Caco-2 (cell line): ENCODE measurements at regions of chr4 and their contacts with region 1.

Region 1: DNA sequence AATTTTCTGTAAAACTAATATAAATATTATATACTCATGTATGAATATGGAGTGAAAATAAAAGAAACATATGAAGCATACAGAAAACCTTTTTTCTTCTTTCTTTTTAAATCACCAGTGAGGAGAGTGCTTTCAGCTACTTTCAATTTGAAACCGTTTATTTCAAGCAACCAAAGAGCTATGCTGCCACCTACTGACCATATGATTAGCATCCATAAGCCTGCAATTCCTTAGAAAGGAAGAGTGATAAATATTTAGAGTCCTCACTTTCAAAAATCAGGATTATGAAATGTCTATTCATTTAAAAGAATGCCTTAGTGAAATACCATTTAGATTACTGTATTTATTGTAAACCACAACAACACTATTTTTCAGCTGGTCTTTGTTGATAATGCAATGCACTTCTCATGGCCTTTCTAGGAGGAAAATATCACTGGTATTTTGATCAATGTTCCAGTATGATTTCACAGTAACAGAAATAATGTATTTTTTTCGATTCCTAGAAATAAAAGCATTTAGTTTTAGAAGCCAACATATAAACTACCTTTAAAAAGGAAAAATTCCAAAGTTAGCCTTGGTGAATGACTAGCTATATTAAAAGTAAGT is 667.6 kb downstream of the PCDH18 start:
- DNase-seq: peak in 1 of 2 experiments; percentile 54
- H3K4me3 ChIP-seq: no peak overlapping the region
- H3K4me3 Mint-ChIP-seq: no peak overlapping the region
- H3K27ac Mint-ChIP-seq: no peak overlapping the region
- H3K4me1 ChIP-seq: no peaks in the 10 kb centered on the region
- H3K4me1 Mint-ChIP-seq: no peaks in the 10 kb centered on the region
- H3K27me3 ChIP-seq: no peaks in the 10 kb centered on the region
- H3K27me3 Mint-ChIP-seq: no peaks in the 10 kb centered on the region
- CTCF ChIP-seq: peak; percentile 57 to 68

Region 2: GRCh38 chr4:136400829-136401228 is 463.9 kb before region 1 on chr4:
- CTCF ChIA-PET with region 1: no interaction called
- POLR2A ChIA-PET with region 1: no interaction called
- intact Hi-C with region 1: loop called (anchors 2 kb)
- DNase-seq: no peak
- H3K4me3 ChIP-seq: no peak overlapping the region
- H3K4me3 Mint-ChIP-seq: no peak overlapping the region
- H3K27ac Mint-ChIP-seq: no peak overlapping the region
- H3K4me1 ChIP-seq: no peaks in the 10 kb centered on the region
- H3K4me1 Mint-ChIP-seq: no peaks in the 10 kb centered on the region
- H3K27me3 ChIP-seq: no peaks in the 10 kb centered on the region
- H3K27me3 Mint-ChIP-seq: no peaks in the 10 kb centered on the region
- CTCF ChIP-seq: no peak

Region 3: DNA sequence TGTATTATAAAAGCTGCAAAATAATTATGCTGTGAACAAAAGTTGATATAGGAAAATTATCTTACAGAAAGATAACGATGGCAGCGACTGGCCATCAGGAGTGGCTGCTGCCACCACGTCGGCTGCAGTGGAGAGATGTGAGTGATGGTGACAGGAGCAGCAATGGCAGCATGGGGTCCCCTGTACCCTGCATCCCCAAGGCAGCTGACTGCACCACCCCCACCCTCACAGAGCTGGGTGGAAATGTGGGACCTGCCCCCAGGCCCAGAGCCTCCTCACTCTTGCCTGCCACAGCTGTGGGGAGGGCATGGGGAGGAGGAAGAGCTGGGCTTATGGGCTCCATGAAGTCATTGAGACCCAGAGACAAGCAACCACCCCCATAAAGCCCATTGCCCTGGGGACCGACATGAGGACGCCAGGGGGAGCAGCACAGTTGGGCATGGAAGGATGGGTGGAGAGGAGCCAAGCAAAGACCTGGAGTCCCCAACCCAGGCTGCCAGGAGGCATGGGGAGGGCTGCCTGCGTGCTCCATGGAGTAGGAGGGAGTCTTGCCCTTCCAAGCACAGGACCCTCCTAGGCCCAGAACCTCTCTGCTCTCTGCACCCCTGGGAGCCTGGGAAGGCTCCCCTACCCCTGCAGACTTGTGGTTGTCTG is 422.9 kb before region 1 on chr4:
- CTCF ChIA-PET with region 1: no interaction called
- POLR2A ChIA-PET with region 1: no interaction called
- intact Hi-C with region 1: loop called (anchors 2 kb)
- DNase-seq: peak in 1 of 2 experiments; percentile 6
- H3K4me3 ChIP-seq: no peak overlapping the region
- H3K4me3 Mint-ChIP-seq: no peak overlapping the region
- H3K27ac Mint-ChIP-seq: no peak overlapping the region
- H3K4me1 ChIP-seq: no peaks in the 10 kb centered on the region
- H3K4me1 Mint-ChIP-seq: no peaks in the 10 kb centered on the region
- H3K27me3 ChIP-seq: no peaks in the 10 kb centered on the region
- H3K27me3 Mint-ChIP-seq: no peaks in the 10 kb centered on the region
- CTCF ChIP-seq: no peak

Region 4: GRCh38 chr4:136687118-136687517 is 177.6 kb before region 1 on chr4:
- CTCF ChIA-PET with region 1: no interaction called
- POLR2A ChIA-PET with region 1: no interaction called
- intact Hi-C with region 1: loop called (anchors 1 kb)
- DNase-seq: peak in 1 of 2 experiments; percentile 4
- H3K4me3 ChIP-seq: no peak overlapping the region
- H3K4me3 Mint-ChIP-seq: no peak overlapping the region
- H3K27ac Mint-ChIP-seq: no peak overlapping the region
- H3K4me1 ChIP-seq: no peaks in the 10 kb centered on the region
- H3K4me1 Mint-ChIP-seq: no peaks in the 10 kb centered on the region
- H3K27me3 ChIP-seq: no peaks in the 10 kb centered on the region
- H3K27me3 Mint-ChIP-seq: peaks cover 6% of the 10 kb centered on the region
- CTCF ChIP-seq: peak in 1 of 2 experiments; percentile 6

Region 5: GRCh38 chr4:136763919-136764318 is 100.8 kb before region 1 on chr4:
- CTCF ChIA-PET with region 1: no interaction called
- POLR2A ChIA-PET with region 1: no interaction called
- intact Hi-C with region 1: no loop called
- DNase-seq: no peak
- H3K4me3 ChIP-seq: no peak overlapping the region
- H3K4me3 Mint-ChIP-seq: no peak overlapping the region
- H3K27ac Mint-ChIP-seq: no peak overlapping the region
- H3K4me1 ChIP-seq: no peaks in the 10 kb centered on the region
- H3K4me1 Mint-ChIP-seq: no peaks in the 10 kb centered on the region
- H3K27me3 ChIP-seq: no peaks in the 10 kb centered on the region
- H3K27me3 Mint-ChIP-seq: no peaks in the 10 kb centered on the region
- CTCF ChIP-seq: no peak

Region 6: GRCh38 chr4:136962868-136963267 is 98.2 kb after region 1 on chr4:
- CTCF ChIA-PET with region 1: no interaction called
- POLR2A ChIA-PET with region 1: no interaction called
- intact Hi-C with region 1: no loop called
- DNase-seq: no peak
- H3K4me3 ChIP-seq: no peak overlapping the region
- H3K4me3 Mint-ChIP-seq: no peak overlapping the region
- H3K27ac Mint-ChIP-seq: no peak overlapping the region
- H3K4me1 ChIP-seq: no peaks in the 10 kb centered on the region
- H3K4me1 Mint-ChIP-seq: no peaks in the 10 kb centered on the region
- H3K27me3 ChIP-seq: no peaks in the 10 kb centered on the region
- H3K27me3 Mint-ChIP-seq: no peaks in the 10 kb centered on the region
- CTCF ChIP-seq: no peak

Region 7: GRCh38 chr4:137274404-137274803 is 409.7 kb after region 1 on chr4:
- CTCF ChIA-PET with region 1: no interaction called
- POLR2A ChIA-PET with region 1: no interaction called
- intact Hi-C with region 1: no loop called
- DNase-seq: no peak
- H3K4me3 ChIP-seq: no peak overlapping the region
- H3K4me3 Mint-ChIP-seq: no peak overlapping the region
- H3K27ac Mint-ChIP-seq: no peak overlapping the region
- H3K4me1 ChIP-seq: no peaks in the 10 kb centered on the region
- H3K4me1 Mint-ChIP-seq: no peaks in the 10 kb centered on the region
- H3K27me3 ChIP-seq: no peaks in the 10 kb centered on the region
- H3K27me3 Mint-ChIP-seq: no peaks in the 10 kb centered on the region
- CTCF ChIP-seq: no peak